GM12878 (cell line): ENCODE measurements at regions of chr7 and their contacts with region 1.

Region 1: DNA sequence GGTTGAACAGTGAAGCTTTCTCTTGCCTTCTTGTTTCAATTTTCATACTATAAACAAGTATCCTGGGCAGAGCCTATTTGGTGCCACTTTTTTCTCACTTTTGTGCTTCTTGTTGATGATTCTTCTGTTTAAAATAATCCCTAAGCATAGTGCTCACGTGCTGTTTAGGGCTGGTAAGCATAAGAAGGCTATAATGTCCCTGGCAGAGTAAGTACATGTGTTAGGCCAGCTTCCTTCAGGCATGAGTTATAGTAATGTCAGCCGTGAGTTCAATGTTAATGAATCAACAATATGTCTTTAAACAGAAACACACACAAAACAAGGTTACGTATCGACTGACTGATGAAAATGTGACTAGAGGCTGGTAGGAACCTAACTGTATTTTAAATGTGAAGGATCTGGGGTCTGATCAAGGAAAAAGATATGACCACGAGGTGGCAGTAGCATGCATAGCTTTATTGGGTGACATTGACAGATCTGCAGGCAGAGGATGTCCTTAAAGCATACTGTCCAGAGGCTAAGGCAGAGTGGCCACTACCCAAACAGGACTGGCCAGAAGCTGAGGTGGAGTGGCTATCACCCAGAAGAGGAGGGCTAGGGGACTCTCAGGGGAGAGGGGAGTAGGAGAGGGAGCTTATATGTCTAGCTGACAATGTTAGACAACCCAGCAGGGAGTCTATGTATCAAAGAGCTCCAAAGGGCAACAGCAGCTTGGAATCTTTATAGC is 113.7 kb downstream of the BRAF start:
- DNase-seq: peak; percentile 51
- ATAC-seq: peak; percentile 100
- H3K4me3 ChIP-seq: no peak overlapping the region
- H3K27ac ChIP-seq: no peak overlapping the region
- H3K4me1 ChIP-seq: no peaks in the 10 kb centered on the region
- H3K27me3 ChIP-seq: no peaks in the 10 kb centered on the region
- CTCF ChIP-seq: peak; percentile 55 to 72 (median 70); a peak in 5 of 6 replicates
- EP300 ChIP-seq: no peak
- POLR2A ChIP-seq: no peak
- RAD21 ChIP-seq: peak; percentile 74

Region 2: GRCh38 chr7:140673063-140673773 is 137.8 kb before region 1 on chr7:
- CTCF ChIA-PET with region 1: interaction called, 46 read pairs
- POLR2A ChIA-PET with region 1: interaction called, 3 read pairs
- RAD21 ChIA-PET with region 1: interaction called, 14 read pairs
- SMC1A ChIA-PET with region 1: interaction called, 33 read pairs
- in situ Hi-C with region 1: no loop called
- intact Hi-C with region 1: no loop called
- DNase-seq: no peak
- ATAC-seq: peak; percentile 62
- H3K4me3 ChIP-seq: peak overlapping the region; percentile 82
- H3K27ac ChIP-seq: peak overlapping the region; percentile 65
- H3K4me1 ChIP-seq: peaks cover 39% of the 10 kb centered on the region
- H3K27me3 ChIP-seq: no peaks in the 10 kb centered on the region
- CTCF ChIP-seq: 0 out of 6 replicates have a peak, but pooled peaks of 1 of the 3 experiments have one; percentile 2
- EP300 ChIP-seq: no peak
- POLR2A ChIP-seq: peak; percentile 31; the same call in 1 of the 2 replicates
- RAD21 ChIP-seq: no peak

Region 3: GRCh38 chr7:140778975-140779374 is 32.0 kb before region 1 on chr7:
- CTCF ChIA-PET with region 1: no interaction called
- POLR2A ChIA-PET with region 1: no interaction called
- RAD21 ChIA-PET with region 1: no interaction called
- SMC1A ChIA-PET with region 1: no interaction called
- in situ Hi-C with region 1: no loop called
- intact Hi-C with region 1: no loop called
- DNase-seq: no peak
- ATAC-seq: no peak
- H3K4me3 ChIP-seq: no peak overlapping the region
- H3K27ac ChIP-seq: no peak overlapping the region
- H3K4me1 ChIP-seq: no peaks in the 10 kb centered on the region
- H3K27me3 ChIP-seq: no peaks in the 10 kb centered on the region
- CTCF ChIP-seq: no peak
- EP300 ChIP-seq: no peak
- POLR2A ChIP-seq: no peak
- RAD21 ChIP-seq: no peak

Region 4: GRCh38 chr7:140902303-140902953 is 91.4 kb after region 1 on chr7:
- CTCF ChIA-PET with region 1: interaction called, 6 read pairs
- POLR2A ChIA-PET with region 1: no interaction called
- RAD21 ChIA-PET with region 1: interaction called, 5 read pairs
- SMC1A ChIA-PET with region 1: interaction called, 10 read pairs
- in situ Hi-C with region 1: no loop called
- intact Hi-C with region 1: no loop called
- DNase-seq: peak; percentile 48
- ATAC-seq: peak; percentile 79
- H3K4me3 ChIP-seq: 0 out of 2 replicates have a peak overlapping the region, but pooled peaks have one; percentile 24
- H3K27ac ChIP-seq: peak overlapping the region; percentile 52; the same call in 1 of the 2 replicates
- H3K4me1 ChIP-seq: peaks cover 8% of the 10 kb centered on the region; the same call in 1 of the 2 replicates
- H3K27me3 ChIP-seq: no peaks in the 10 kb centered on the region
- CTCF ChIP-seq: no peak
- EP300 ChIP-seq: peak; percentile 44 to 51; a peak in 1 of 4 replicates
- POLR2A ChIP-seq: no peak
- RAD21 ChIP-seq: no peak

Region 5: DNA sequence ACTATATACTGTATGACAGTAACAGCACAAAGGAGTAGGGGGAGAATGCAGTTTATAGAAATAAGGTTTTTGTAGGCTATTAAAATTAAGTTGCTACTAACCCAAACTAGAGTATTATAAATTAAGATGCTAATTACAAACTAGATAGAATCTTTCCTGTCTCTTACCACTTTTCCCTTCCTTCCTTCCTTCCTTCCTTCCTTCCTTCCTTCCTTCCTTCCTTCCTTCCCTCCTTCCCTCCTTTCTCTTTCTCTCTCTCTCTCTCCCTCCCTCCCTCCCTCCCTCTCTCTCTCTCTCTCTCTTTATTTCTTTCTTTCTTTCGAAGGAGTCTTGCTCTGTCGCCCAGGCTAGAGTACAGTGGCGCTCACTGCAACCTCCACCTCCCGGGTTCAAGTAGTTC is 150.1 kb after region 1 on chr7:
- CTCF ChIA-PET with region 1: interaction called, 13 read pairs
- POLR2A ChIA-PET with region 1: no interaction called
- RAD21 ChIA-PET with region 1: no interaction called
- SMC1A ChIA-PET with region 1: no interaction called
- in situ Hi-C with region 1: no loop called
- intact Hi-C with region 1: no loop called
- DNase-seq: no peak
- ATAC-seq: no peak
- H3K4me3 ChIP-seq: no peak overlapping the region
- H3K27ac ChIP-seq: no peak overlapping the region
- H3K4me1 ChIP-seq: no peaks in the 10 kb centered on the region
- H3K27me3 ChIP-seq: no peaks in the 10 kb centered on the region
- CTCF ChIP-seq: no peak
- EP300 ChIP-seq: no peak
- POLR2A ChIP-seq: no peak
- RAD21 ChIP-seq: no peak

Region 6: DNA sequence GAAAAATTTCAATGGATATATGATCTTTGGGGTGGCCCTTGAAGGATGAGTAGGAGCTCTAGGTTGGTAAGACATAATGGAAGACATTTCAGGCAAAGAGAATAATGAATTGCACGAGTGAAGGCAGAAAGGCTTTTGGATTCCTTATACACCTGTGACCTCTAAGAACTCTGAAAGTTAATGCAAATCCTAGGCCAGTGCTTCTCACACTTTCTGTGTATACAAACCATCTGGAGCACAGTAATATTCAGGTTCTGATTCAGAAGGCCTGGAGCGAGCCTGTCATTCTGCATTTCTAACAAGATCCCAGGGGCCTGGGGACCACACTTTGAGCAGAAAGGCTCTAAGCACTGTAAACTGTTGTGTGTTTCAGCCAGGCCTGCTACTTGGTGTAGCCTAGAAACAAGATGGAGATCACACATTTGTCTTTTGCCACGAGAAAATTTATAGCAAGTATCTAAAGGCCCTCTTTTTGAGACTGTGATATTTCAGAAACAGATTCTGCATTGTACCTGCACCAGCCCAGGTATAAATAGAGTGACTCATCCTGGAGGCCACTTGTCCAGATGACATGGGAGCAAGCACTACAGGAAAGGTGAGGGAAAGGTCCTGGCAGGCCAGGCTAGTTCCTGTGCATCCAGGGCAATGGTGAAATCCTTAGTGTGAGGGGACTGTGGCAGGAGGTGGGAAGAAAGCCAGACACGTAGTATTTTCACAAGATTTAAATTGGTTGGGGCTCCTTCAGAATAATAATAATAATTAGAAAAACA is 179.4 kb after region 1 on chr7:
- CTCF ChIA-PET with region 1: interaction called, 10 read pairs
- POLR2A ChIA-PET with region 1: no interaction called
- RAD21 ChIA-PET with region 1: interaction called, 3 read pairs
- SMC1A ChIA-PET with region 1: interaction called, 5 read pairs
- in situ Hi-C with region 1: no loop called
- intact Hi-C with region 1: loop called (anchors 5 kb)
- DNase-seq: no peak
- ATAC-seq: no peak
- H3K4me3 ChIP-seq: no peak overlapping the region
- H3K27ac ChIP-seq: no peak overlapping the region
- H3K4me1 ChIP-seq: no peaks in the 10 kb centered on the region
- H3K27me3 ChIP-seq: no peaks in the 10 kb centered on the region
- CTCF ChIP-seq: no peak
- EP300 ChIP-seq: no peak
- POLR2A ChIP-seq: no peak
- RAD21 ChIP-seq: no peak

Region 7: GRCh38 chr7:141220263-141220880 is 409.4 kb after region 1 on chr7:
- CTCF ChIA-PET with region 1: interaction called, 7 read pairs
- POLR2A ChIA-PET with region 1: no interaction called
- RAD21 ChIA-PET with region 1: interaction called, 8 read pairs
- SMC1A ChIA-PET with region 1: interaction called, 10 read pairs
- in situ Hi-C with region 1: loop called (anchors 25 kb)
- intact Hi-C with region 1: loop called (anchors 5 kb)
- DNase-seq: no peak
- ATAC-seq: peak; percentile 87
- H3K4me3 ChIP-seq: no peak overlapping the region
- H3K27ac ChIP-seq: no peak overlapping the region
- H3K4me1 ChIP-seq: no peaks in the 10 kb centered on the region
- H3K27me3 ChIP-seq: no peaks in the 10 kb centered on the region; a peak in 1 of 4 replicates
- CTCF ChIP-seq: peak; percentile 21 to 53 (median 42); a peak in 4 of 6 replicates
- EP300 ChIP-seq: no peak
- POLR2A ChIP-seq: no peak
- RAD21 ChIP-seq: peak; percentile 72

Region 8: GRCh38 chr7:141301544-141301943 is 490.6 kb after region 1 on chr7:
- CTCF ChIA-PET with region 1: no interaction called
- POLR2A ChIA-PET with region 1: no interaction called
- RAD21 ChIA-PET with region 1: no interaction called
- SMC1A ChIA-PET with region 1: no interaction called
- in situ Hi-C with region 1: no loop called
- intact Hi-C with region 1: no loop called
- DNase-seq: no peak
- ATAC-seq: no peak
- H3K4me3 ChIP-seq: no peak overlapping the region
- H3K27ac ChIP-seq: no peak overlapping the region
- H3K4me1 ChIP-seq: no peaks in the 10 kb centered on the region
- H3K27me3 ChIP-seq: no peaks in the 10 kb centered on the region
- CTCF ChIP-seq: no peak
- EP300 ChIP-seq: no peak
- POLR2A ChIP-seq: no peak
- RAD21 ChIP-seq: no peak